H1 (cell line): ENCODE measurements at regions of chr3 and their contacts with region 1.

Region 1: DNA sequence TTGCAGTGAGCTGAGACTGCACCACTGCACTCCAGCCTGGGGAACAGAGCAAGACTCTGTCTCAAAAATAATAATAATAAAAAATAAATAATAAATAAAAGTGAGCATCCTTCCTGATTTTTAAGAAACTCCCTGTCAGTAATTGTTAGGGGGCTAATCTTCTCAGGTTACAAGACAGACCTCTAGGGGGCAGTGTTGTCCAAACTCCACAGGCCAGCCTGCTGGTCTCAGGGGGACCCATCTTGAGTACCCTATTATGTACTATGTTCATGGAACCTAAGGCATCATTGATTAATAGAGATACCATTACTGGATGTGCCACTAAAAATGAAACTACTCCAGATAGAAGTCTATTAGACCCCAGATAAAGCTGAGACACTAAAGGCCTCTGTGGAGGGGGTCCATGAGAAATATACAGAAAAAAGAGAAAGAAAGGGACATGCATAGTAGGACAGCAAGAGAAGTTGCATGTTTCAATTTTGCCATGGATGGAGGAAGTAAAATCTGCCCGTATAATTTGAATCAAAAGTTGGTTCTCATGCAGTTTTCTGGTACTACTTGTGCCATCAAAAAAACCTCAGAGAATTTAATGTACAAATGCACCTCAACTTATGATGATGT is 85.5 kb upstream of the CDV3 start:
- DNase-seq: no peak
- H3K4me3 ChIP-seq: no peak overlapping the region
- H3K27ac ChIP-seq: no peak overlapping the region
- H3K4me1 ChIP-seq: peaks cover 2 to 9% (median 3%) of the 10 kb centered on the region in 4 experiments
- H3K27me3 ChIP-seq: no peaks in the 10 kb centered on the region
- CTCF ChIP-seq: peak; percentile 47 to 57 (median 50)
- EP300 ChIP-seq: no peak
- POLR2A ChIP-seq: no peak
- RAD21 ChIP-seq: peak; percentile 62 to 72

Region 2: GRCh38 chr3:133413161-133414020 is 74.6 kb before region 1 on chr3:
- CTCF ChIA-PET with region 1: no interaction called
- POLR2A ChIA-PET with region 1: no interaction called
- DNase-seq: no peak
- H3K4me3 ChIP-seq: no peak overlapping the region
- H3K27ac ChIP-seq: no peak overlapping the region
- H3K4me1 ChIP-seq: no peaks in the 10 kb centered on the region
- H3K27me3 ChIP-seq: no peaks in the 10 kb centered on the region
- CTCF ChIP-seq: no peak
- EP300 ChIP-seq: no peak
- POLR2A ChIP-seq: no peak
- RAD21 ChIP-seq: no peak

Region 3: DNA sequence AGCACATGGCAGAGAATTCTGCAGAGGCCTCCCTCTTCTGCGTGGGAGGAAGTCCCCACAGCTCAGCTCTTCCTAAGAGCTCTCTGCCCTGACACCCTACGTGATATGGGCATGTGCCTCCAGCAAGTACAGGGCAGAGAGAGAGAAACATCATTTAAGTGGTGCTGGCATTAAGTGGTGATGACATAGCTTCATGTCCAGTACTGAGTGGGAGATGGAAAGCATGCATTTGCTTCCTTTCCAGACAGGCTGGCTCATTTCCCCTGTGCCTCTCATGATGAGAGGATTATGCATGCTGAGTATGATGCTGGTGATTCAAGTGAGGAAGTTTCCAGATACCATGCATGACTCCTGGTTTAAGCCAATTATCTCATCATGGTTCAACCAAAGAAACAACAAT is 61.3 kb before region 1 on chr3:
- CTCF ChIA-PET with region 1: no interaction called
- POLR2A ChIA-PET with region 1: no interaction called
- DNase-seq: no peak
- H3K4me3 ChIP-seq: no peak overlapping the region
- H3K27ac ChIP-seq: no peak overlapping the region
- H3K4me1 ChIP-seq: no peaks in the 10 kb centered on the region
- H3K27me3 ChIP-seq: no peaks in the 10 kb centered on the region
- CTCF ChIP-seq: no peak
- EP300 ChIP-seq: no peak
- POLR2A ChIP-seq: no peak
- RAD21 ChIP-seq: no peak

Region 4: GRCh38 chr3:133464573-133464972 is 23.5 kb before region 1 on chr3:
- CTCF ChIA-PET with region 1: interaction called, 15 read pairs
- POLR2A ChIA-PET with region 1: no interaction called
- DNase-seq: no peak
- H3K4me3 ChIP-seq: no peak overlapping the region
- H3K27ac ChIP-seq: no peak overlapping the region
- H3K4me1 ChIP-seq: peaks cover 0 to 10% (median 3%) of the 10 kb centered on the region in 4 experiments; a peak in 2 of 7 replicates
- H3K27me3 ChIP-seq: no peaks in the 10 kb centered on the region
- CTCF ChIP-seq: no peak
- EP300 ChIP-seq: no peak
- POLR2A ChIP-seq: no peak
- RAD21 ChIP-seq: no peak

Region 5: DNA sequence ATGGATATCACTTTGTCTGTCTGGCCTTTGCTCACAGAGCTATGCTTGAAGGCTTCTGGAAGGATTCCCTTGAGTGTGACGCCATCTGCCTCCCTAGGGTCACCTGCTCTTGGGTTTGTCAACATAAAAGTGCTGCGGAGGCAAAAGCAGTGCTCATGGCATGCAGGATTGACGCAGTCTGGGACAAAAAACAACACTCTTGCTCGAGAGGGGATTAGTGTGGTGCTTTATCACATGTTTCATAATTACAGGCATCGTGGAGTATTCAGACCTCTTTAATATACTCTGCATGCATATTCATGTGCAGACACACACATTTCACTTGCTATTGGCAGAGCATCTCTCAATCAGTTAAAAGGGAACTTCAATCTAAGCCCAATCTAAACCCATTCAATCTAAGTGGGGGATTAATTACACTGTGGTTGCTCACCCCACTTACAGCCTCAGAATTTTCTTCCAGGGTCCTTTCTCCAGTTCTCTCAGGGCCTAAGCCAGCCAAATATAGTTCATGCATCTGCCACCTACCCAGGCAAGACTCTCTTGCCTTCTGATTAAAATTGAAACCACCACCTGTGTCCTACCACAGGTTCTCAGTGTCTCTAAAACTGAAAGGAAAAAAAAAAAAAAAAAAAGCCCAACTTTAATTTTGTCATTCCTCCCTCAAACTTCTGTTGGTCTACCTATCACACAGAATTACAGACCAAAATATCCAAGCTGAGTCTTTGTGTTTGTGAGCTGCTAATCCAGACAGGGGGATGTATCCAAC is 12.6 kb before region 1 on chr3:
- CTCF ChIA-PET with region 1: interaction called, 13 read pairs
- POLR2A ChIA-PET with region 1: interaction called, 4 read pairs
- DNase-seq: no peak
- H3K4me3 ChIP-seq: no peak overlapping the region
- H3K27ac ChIP-seq: no peak overlapping the region
- H3K4me1 ChIP-seq: peaks cover 0 to 12% (median 6%) of the 10 kb centered on the region in 4 experiments; a peak in 5 of 7 replicates
- H3K27me3 ChIP-seq: peaks cover 0 to 5% (median 0%) of the 10 kb centered on the region in 4 experiments; a peak in 4 of 7 replicates
- CTCF ChIP-seq: no peak
- EP300 ChIP-seq: no peak
- POLR2A ChIP-seq: no peak
- RAD21 ChIP-seq: no peak

Region 6: DNA sequence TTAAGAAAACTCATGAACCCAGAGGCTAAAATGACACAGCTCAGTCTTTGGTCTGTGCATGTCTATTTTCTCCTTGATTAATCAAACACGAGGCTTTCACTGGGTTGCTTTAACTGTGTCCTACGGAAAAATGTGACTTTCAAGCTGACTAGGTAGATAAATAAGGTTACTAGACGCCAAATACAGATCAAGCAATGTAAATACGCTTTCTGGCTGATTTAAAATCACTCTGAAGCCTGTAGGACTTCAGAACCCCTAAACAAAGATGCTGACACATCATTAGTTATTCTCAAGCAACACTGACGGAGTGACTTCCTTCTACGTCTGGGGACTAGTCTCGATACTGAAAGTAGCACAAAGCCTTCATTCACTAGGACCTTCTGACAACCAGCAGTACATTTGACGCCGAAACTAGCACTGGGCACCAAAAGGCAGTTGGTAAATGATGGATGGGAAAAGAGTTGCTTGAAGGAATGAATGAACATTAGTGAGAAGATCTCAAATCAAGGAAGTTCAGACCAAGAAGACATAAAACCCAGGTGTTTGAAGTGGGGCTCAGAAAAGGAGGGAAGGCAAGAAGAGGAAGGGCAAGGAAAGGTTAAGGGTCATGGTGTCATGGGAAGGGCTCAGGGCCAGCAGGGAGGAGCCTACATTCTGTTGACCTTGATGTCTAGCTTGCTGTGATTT is 18.3 kb after region 1 on chr3:
- CTCF ChIA-PET with region 1: interaction called, 12 read pairs
- POLR2A ChIA-PET with region 1: no interaction called
- DNase-seq: no peak
- H3K4me3 ChIP-seq: no peak overlapping the region
- H3K27ac ChIP-seq: no peak overlapping the region
- H3K4me1 ChIP-seq: no peaks in the 10 kb centered on the region
- H3K27me3 ChIP-seq: no peaks in the 10 kb centered on the region
- CTCF ChIP-seq: no peak
- EP300 ChIP-seq: no peak
- POLR2A ChIP-seq: no peak
- RAD21 ChIP-seq: no peak